Activated CD4-positive, alpha-beta T cell treated with anti-CD3 and anti-CD28 coated beads for 36 hours (primary cell): ENCODE measurements at regions of chrX and their contacts with region 1.

Region 1: GRCh38 chrX:79366873-79367749 is at the start of gene ITM2A:
- DNase-seq: peak; percentile 78
- ATAC-seq: peak; percentile 80
- H3K4me3 Mint-ChIP-seq: peak within 1 kb of the TSS; percentile 96
- H3K27ac Mint-ChIP-seq: peak within 1 kb of the TSS; percentile 96
- H3K4me1 Mint-ChIP-seq: peaks cover 29% of the 10 kb centered on the region
- H3K27me3 Mint-ChIP-seq: no peaks in the 10 kb centered on the region
- total RNA-seq, gene ITM2A: 89.0 to 112 TPM

Region 2: DNA sequence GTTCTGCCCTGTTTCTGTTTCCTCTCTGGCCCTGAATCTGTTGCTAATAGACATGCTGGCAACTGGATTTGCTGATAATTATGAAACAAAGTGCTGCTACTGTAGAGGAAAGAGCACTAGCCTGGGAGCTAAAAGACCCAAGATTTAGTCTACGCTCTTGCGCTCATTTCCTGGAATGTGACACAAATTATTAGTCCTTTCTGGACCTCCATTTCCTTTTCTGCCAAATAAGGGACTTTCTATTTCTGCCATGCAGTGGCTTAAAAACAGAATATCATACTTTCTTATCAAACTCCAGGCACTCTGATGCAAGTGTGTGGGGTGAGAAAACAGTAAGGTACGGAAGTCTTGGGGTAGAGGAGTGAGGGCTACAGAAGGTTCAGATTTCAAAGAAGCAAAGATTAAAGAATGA is 271.0 kb before region 1 on chrX:
- CTCF ChIA-PET with region 1: no interaction called
- POLR2A ChIA-PET with region 1: no interaction called
- intact Hi-C with region 1: loop called (anchors 5 kb)
- DNase-seq: no peak
- ATAC-seq: peak; percentile 20
- H3K4me3 Mint-ChIP-seq: peak overlapping the region; percentile 46
- H3K27ac Mint-ChIP-seq: peak overlapping the region; percentile 83
- H3K4me1 Mint-ChIP-seq: peaks cover 61% of the 10 kb centered on the region
- H3K27me3 Mint-ChIP-seq: no peaks in the 10 kb centered on the region

Region 3: GRCh38 chrX:79161655-79162054 is 205.5 kb before region 1 on chrX:
- CTCF ChIA-PET with region 1: no interaction called
- POLR2A ChIA-PET with region 1: no interaction called
- intact Hi-C with region 1: loop called in 1 of 2 experiments (anchors 5 kb)
- DNase-seq: peak; percentile 50
- ATAC-seq: peak; percentile 77
- H3K4me3 Mint-ChIP-seq: peak overlapping the region; percentile 75
- H3K27ac Mint-ChIP-seq: peak overlapping the region; percentile 93
- H3K4me1 Mint-ChIP-seq: peaks cover 62% of the 10 kb centered on the region
- H3K27me3 Mint-ChIP-seq: no peaks in the 10 kb centered on the region

Region 4: GRCh38 chrX:79288733-79289132 is 78.4 kb before region 1 on chrX:
- CTCF ChIA-PET with region 1: no interaction called
- POLR2A ChIA-PET with region 1: no interaction called
- intact Hi-C with region 1: loop called in 1 of 2 experiments (anchors 5 kb)
- DNase-seq: no peak
- ATAC-seq: no peak
- H3K4me3 Mint-ChIP-seq: no peak overlapping the region
- H3K27ac Mint-ChIP-seq: peak overlapping the region; percentile 37
- H3K4me1 Mint-ChIP-seq: peaks cover 44% of the 10 kb centered on the region
- H3K27me3 Mint-ChIP-seq: no peaks in the 10 kb centered on the region

Region 5: DNA sequence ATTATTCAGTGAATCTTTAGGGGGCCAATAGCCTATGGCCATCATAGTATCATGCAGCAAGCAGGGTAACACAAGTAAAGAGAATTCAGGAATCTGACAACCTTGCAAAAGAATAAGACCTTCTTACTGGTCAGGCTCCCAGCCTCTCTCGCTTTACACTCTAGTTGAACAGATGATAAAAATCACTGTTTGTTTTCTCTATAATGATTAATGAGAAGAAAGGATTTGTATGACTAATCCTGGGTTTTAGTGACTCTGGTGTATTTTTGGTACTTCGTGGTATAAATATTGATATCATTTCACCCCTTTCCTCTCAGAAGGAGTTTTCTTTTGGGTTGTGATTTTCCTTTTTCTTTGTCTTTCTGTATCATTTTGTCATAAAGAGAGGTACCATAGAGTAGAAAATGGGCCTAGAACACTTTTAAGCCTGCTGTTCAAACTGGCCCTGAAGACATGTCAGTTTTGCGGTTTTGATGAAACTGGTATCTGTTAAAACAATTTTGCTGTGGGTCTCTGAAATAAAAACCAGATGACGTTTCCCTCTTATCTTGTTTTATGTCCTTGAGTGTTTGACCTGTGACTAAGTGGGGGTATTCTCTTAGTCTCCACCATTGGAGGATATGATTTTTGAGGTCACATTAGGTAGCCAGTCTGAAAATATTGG is 352.6 kb after region 1 on chrX:
- CTCF ChIA-PET with region 1: no interaction called
- POLR2A ChIA-PET with region 1: no interaction called
- intact Hi-C with region 1: no loop called
- DNase-seq: no peak
- ATAC-seq: no peak
- H3K4me3 Mint-ChIP-seq: no peak overlapping the region
- H3K27ac Mint-ChIP-seq: no peak overlapping the region
- H3K4me1 Mint-ChIP-seq: no peaks in the 10 kb centered on the region
- H3K27me3 Mint-ChIP-seq: no peaks in the 10 kb centered on the region